Activated T-helper 1 cell treated with anti-CD3 and anti-CD28 coated beads, Interleukin-12 subunit alpha, Interleukin-12 subunit beta, Interleukin-2, Interleukin-4 antibody, amounts not matched to agents 30 ng/mL and 10 ng/mL and 1 ng/mL, durations not matched to agents 14 hours and 24 hours and 36 hours (primary cell): ENCODE measurements at regions of chr7 and their contacts with region 1.

Region 1: DNA sequence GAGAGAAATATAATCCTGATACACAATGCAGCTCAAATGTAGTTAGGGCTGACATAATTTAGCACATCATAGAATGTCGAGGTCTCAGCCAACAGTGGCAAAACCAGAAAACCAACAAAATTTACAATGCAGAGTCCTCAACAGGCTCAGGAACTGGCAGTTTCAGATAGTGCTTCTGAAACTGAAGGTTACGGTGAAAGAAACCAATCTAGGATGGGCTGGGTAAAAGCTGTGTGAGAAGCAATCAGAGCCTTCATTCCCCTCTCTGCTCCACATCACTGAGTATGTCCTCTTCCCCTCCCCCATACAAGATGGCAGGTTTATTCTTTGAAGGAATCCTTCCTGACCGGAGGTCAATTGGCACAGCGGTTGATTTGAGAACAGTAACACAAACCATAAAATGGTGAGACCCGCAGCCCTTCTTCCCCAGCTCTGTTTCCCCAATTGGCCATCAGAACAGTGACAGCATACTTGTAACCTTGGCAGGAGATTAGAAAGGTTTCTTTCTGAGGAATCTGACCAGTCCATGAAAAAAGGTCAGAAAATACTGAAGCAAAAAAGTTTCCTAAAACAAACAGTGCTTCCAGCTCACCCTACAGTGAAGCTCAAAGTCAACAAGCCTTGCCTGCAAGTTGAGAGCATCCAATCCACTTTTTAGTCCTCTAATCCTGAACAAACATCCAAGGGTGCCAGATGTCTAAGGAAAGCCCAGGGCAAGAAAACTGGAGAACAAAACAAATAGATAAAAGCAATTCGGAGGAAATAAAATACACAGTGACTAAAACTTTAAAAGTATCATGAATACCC is 54.0 kb upstream of the IL6 start:
- DNase-seq: no peak
- H3K4me3 Mint-ChIP-seq: peak overlapping the region; percentile 6
- H3K27ac Mint-ChIP-seq: no peak overlapping the region
- H3K4me1 Mint-ChIP-seq: peaks cover 66% of the 10 kb centered on the region
- H3K27me3 Mint-ChIP-seq: peaks cover 3% of the 10 kb centered on the region

Region 2: GRCh38 chr7:21281183-21281582 is 1391.9 kb before region 1 on chr7:
- intact Hi-C with region 1: no loop called
- DNase-seq: no peak
- H3K4me3 Mint-ChIP-seq: no peak overlapping the region
- H3K27ac Mint-ChIP-seq: no peak overlapping the region
- H3K4me1 Mint-ChIP-seq: peaks cover 14% of the 10 kb centered on the region
- H3K27me3 Mint-ChIP-seq: no peaks in the 10 kb centered on the region

Region 3: GRCh38 chr7:21352540-21353387 is 1320.3 kb before region 1 on chr7:
- intact Hi-C with region 1: loop called (anchors 10 kb)
- DNase-seq: no peak
- H3K4me3 Mint-ChIP-seq: peak overlapping the region; percentile 67
- H3K27ac Mint-ChIP-seq: peak overlapping the region; percentile 96
- H3K4me1 Mint-ChIP-seq: peaks cover 69% of the 10 kb centered on the region
- H3K27me3 Mint-ChIP-seq: no peaks in the 10 kb centered on the region

Region 4: GRCh38 chr7:22433710-22434460 is 239.2 kb before region 1 on chr7:
- intact Hi-C with region 1: no loop called
- DNase-seq: no peak
- H3K4me3 Mint-ChIP-seq: no peak overlapping the region
- H3K27ac Mint-ChIP-seq: no peak overlapping the region
- H3K4me1 Mint-ChIP-seq: peaks cover 4% of the 10 kb centered on the region
- H3K27me3 Mint-ChIP-seq: peaks cover 11% of the 10 kb centered on the region

Region 5: DNA sequence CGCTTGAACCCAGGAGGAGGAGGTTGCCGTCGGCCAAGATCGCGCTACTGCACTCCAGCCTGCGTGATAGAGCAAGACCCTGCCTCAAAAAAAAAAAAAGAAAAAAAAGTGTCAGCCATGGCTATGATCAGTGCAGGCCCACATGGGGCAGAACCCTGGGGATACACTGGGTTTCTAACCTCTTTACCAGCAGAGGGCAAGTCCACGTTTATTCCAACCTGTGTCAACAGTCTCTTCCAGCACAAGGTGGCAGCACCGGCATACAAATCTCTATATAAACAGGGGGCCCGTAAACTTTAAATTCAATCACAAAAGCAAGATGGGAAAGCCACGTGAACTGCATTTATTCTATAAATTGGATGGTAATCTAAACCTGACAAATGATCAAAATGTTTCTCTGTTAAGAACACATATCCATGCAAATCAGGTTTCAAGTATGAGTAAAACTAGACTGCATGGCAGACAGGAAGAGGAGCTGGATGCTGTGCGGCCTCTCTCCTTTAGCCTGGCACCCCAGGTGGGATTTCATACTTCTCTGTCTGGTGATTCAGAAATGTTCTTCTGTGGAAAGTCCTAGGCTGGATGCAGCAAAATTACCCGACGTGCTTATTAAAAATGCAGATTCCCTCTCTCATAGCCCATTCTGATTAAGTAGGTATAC is 113.1 kb before region 1 on chr7:
- intact Hi-C with region 1: loop called (anchors 1 kb)
- DNase-seq: peak; percentile 55
- H3K4me3 Mint-ChIP-seq: no peak overlapping the region
- H3K27ac Mint-ChIP-seq: no peak overlapping the region
- H3K4me1 Mint-ChIP-seq: peaks cover 44% of the 10 kb centered on the region
- H3K27me3 Mint-ChIP-seq: peaks cover 9% of the 10 kb centered on the region

Region 6: DNA sequence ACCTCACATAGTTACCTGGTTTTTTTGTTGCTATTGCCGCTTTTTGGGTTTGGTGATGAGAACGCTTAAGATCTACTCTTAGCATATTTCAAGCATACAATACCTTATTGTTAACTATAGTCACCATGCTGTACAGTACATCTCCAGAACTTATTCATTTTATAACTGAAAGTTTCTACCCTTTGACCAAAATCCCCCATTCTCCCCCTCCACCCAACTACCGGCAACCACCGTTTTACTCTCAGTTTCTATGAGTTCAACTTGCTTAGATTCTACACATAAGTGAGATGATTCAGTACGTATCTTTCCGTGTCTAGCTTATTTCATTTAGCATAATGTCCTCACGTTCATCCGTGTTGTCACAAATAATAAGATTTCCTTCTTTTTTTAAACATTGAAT is 32.8 kb before region 1 on chr7:
- intact Hi-C with region 1: loop called (anchors 1 kb)
- DNase-seq: peak; percentile 24
- H3K4me3 Mint-ChIP-seq: no peak overlapping the region
- H3K27ac Mint-ChIP-seq: peak overlapping the region; percentile 3
- H3K4me1 Mint-ChIP-seq: peaks cover 16% of the 10 kb centered on the region
- H3K27me3 Mint-ChIP-seq: peaks cover 11% of the 10 kb centered on the region

Region 7: GRCh38 chr7:22726345-22727185 is 53.5 kb after region 1 on chr7:
- intact Hi-C with region 1: loop called (anchors 5 kb)
- DNase-seq: peak; percentile 46
- H3K4me3 Mint-ChIP-seq: peak overlapping the region; percentile 32
- H3K27ac Mint-ChIP-seq: no peak overlapping the region
- H3K4me1 Mint-ChIP-seq: peaks cover 48% of the 10 kb centered on the region
- H3K27me3 Mint-ChIP-seq: peaks cover 29% of the 10 kb centered on the region